Activated naive CD4-positive, alpha-beta T cell treated with anti-CD3 and anti-CD28 coated beads for 36 hours (primary cell): ENCODE measurements at regions of chr1 and their contacts with region 1.

Region 1: DNA sequence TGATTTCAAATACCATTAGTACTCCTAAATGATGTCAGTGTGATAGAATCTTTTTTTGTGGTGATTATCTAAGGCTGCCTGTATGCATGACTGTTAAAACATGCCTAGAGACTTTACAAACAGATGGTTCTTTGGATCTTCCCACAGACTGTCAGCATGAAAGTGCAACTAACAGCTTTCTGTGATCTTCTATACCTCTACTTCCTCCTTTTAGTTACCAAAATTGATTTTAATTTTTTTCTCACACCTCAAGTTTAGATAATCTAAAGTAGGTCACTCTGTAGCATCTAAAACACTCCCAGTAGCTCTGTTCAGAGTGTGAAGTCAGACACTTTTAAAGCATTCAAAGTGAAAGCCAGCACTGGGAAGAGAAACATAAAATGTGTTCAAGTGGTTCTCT is 534.5 kb downstream of the PTPRC start:
- DNase-seq: peak; percentile 44
- H3K4me3 Mint-ChIP-seq: no peak overlapping the region
- H3K27ac Mint-ChIP-seq: no peak overlapping the region
- H3K4me1 Mint-ChIP-seq: peaks cover 45% of the 10 kb centered on the region
- H3K27me3 Mint-ChIP-seq: peaks cover 3% of the 10 kb centered on the region

Region 2: DNA sequence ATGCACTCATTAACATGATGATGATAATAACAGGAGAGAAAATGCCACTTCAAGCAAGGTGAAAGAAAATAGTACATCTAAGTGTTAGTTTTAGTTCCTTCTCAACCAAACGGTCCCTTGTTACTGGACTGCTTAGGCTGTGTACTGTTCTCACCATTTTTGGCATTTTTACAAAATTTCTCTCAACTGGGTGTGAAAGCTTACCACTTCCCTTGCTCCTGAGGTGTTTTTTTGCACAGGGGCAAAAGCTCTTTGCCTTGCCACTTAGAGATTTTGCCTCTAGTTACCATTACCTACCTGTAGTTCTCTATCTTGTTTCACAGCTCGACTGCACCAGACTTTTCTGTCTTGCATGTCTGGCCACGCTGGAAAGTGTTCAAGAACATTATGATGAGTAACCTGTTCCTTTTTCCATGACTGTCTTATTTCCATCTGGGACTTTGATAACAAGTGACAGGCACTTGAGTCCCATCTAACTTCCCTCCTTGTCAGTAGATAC is 1005.9 kb before region 1 on chr1:
- CTCF ChIA-PET with region 1: no interaction called
- intact Hi-C with region 1: loop called (anchors 5 kb)
- DNase-seq: peak; percentile 44
- H3K4me3 Mint-ChIP-seq: peak overlapping the region; percentile 55
- H3K27ac Mint-ChIP-seq: peak overlapping the region; percentile 93
- H3K4me1 Mint-ChIP-seq: peaks cover 90% of the 10 kb centered on the region
- H3K27me3 Mint-ChIP-seq: no peaks in the 10 kb centered on the region

Region 3: GRCh38 chr1:198601936-198602889 is 571.1 kb before region 1 on chr1:
- CTCF ChIA-PET with region 1: no interaction called
- intact Hi-C with region 1: loop called (anchors 1 kb)
- DNase-seq: peak; percentile 87
- H3K4me3 Mint-ChIP-seq: peak overlapping the region; percentile 51
- H3K27ac Mint-ChIP-seq: peak overlapping the region; percentile 85
- H3K4me1 Mint-ChIP-seq: peaks cover 87% of the 10 kb centered on the region
- H3K27me3 Mint-ChIP-seq: no peaks in the 10 kb centered on the region

Region 4: GRCh38 chr1:198922638-198923430 is 250.5 kb before region 1 on chr1:
- CTCF ChIA-PET with region 1: interaction called, 5 read pairs
- intact Hi-C with region 1: loop called (anchors 1 kb)
- DNase-seq: no peak
- H3K4me3 Mint-ChIP-seq: no peak overlapping the region
- H3K27ac Mint-ChIP-seq: peak overlapping the region; percentile 79
- H3K4me1 Mint-ChIP-seq: peaks cover 71% of the 10 kb centered on the region
- H3K27me3 Mint-ChIP-seq: no peaks in the 10 kb centered on the region

Region 5: GRCh38 chr1:199041173-199041914 is 132.0 kb before region 1 on chr1:
- CTCF ChIA-PET with region 1: no interaction called
- intact Hi-C with region 1: no loop called
- DNase-seq: peak; percentile 34
- H3K4me3 Mint-ChIP-seq: peak overlapping the region; percentile 10
- H3K27ac Mint-ChIP-seq: peak overlapping the region; percentile 38
- H3K4me1 Mint-ChIP-seq: peaks cover 20% of the 10 kb centered on the region
- H3K27me3 Mint-ChIP-seq: no peaks in the 10 kb centered on the region

Region 6: GRCh38 chr1:199161766-199162303 is 11.5 kb before region 1 on chr1:
- CTCF ChIA-PET with region 1: no interaction called
- intact Hi-C with region 1: loop called (anchors 1 kb)
- DNase-seq: peak; percentile 11
- H3K4me3 Mint-ChIP-seq: no peak overlapping the region
- H3K27ac Mint-ChIP-seq: peak overlapping the region; percentile 29
- H3K4me1 Mint-ChIP-seq: peaks cover 21% of the 10 kb centered on the region
- H3K27me3 Mint-ChIP-seq: no peaks in the 10 kb centered on the region

Region 7: DNA sequence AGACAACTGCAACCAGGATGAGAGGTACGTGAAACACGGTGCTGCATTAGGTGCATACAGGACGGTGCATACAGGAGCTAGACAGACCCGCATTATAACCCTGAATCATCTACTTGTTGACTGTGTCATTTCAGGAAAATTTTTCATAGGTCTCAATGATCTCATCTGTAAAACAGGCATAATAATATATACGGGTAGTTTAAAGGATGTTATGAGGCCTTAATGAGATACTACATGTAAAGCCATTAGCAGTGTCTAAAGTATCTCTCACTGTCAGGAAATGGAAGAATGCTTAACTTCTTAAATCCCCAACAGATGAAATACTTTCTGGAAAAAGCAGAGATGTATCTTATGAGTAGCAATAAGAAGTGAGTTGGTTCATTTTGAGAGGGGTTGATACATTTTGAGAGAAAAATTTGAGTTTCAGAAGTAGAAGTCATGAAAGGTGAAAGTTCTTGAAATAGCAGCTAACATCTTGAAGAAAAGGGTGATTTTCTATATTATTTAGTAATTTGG is 135.0 kb after region 1 on chr1:
- CTCF ChIA-PET with region 1: interaction called, 6 read pairs
- intact Hi-C with region 1: loop called (anchors 1 kb)
- DNase-seq: no peak
- H3K4me3 Mint-ChIP-seq: no peak overlapping the region
- H3K27ac Mint-ChIP-seq: peak overlapping the region; percentile 51
- H3K4me1 Mint-ChIP-seq: peaks cover 31% of the 10 kb centered on the region
- H3K27me3 Mint-ChIP-seq: peaks cover 25% of the 10 kb centered on the region

Region 8: GRCh38 chr1:200226268-200226968 is 1053.1 kb after region 1 on chr1:
- CTCF ChIA-PET with region 1: no interaction called
- intact Hi-C with region 1: loop called (anchors 5 kb)
- DNase-seq: peak; percentile 70
- H3K4me3 Mint-ChIP-seq: peak overlapping the region; percentile 3
- H3K27ac Mint-ChIP-seq: peak overlapping the region; percentile 64
- H3K4me1 Mint-ChIP-seq: peaks cover 17% of the 10 kb centered on the region
- H3K27me3 Mint-ChIP-seq: peaks cover 4% of the 10 kb centered on the region